ENCODE measurements at regions of chr3 and their contacts with region 1.

Region 1: GRCh38 chr3:44913868-44914468 is 39.6 kb downstream of the TGM4 start:
- DNase-seq: peak; percentile 54 to 62 (median 59)
- H3K4me3 ChIP-seq: no peak overlapping the region
- H3K4me3 Mint-ChIP-seq: no peak overlapping the region
- H3K27ac ChIP-seq: no peak overlapping the region
- H3K27ac Mint-ChIP-seq: peak overlapping the region in 1 of 7 donors; percentile 31
- H3K4me1 ChIP-seq: no peaks in the 10 kb centered on the region
- H3K4me1 Mint-ChIP-seq: peaks cover 0 to 2% (median under 1%) of the 10 kb centered on the region in 4 donors
- H3K27me3 ChIP-seq: no peaks in the 10 kb centered on the region
- H3K27me3 Mint-ChIP-seq: peaks cover 5 to 13% of the 10 kb centered on the region in 2 donors

Region 2: DNA sequence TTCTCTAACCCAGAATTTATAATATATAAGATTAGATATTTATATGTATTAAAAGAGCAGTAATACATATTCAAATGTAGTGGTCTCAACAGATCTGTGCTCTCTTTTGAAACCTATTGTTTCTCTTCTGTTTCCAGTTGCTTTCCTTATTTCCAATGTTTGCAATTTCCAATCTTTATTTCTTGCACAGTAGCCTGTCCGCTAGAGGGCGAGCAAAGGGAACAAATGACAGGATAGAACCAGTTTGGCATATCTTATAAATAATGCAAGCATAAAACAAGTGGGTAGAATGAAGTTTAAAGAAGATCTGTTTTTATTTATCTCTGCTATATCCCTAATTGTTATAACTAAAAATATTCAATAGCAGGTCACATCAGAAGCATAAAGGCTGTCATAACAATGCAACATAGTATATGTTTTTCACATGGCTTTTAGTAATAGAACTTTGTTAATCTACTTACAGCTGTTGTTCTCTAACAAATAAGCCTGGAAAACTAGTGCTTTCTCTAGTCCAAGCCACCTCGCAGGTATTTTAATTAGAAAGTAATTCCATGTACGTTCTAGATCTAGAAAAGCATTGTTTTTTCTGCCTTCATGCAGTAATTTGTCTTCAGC is 590.5 kb before region 1 on chr3:
- CTCF ChIA-PET with region 1: interaction called, 7 read pairs
- POLR2A ChIA-PET with region 1: no interaction called
- intact Hi-C with region 1: loop called (anchors 1 kb)
- DNase-seq: peak in 4 of 5 donors; percentile 39 to 49 (median 46)
- H3K4me3 ChIP-seq: no peak overlapping the region
- H3K4me3 Mint-ChIP-seq: no peak overlapping the region
- H3K27ac ChIP-seq: no peak overlapping the region
- H3K27ac Mint-ChIP-seq: no peak overlapping the region
- H3K4me1 ChIP-seq: no peaks in the 10 kb centered on the region
- H3K4me1 Mint-ChIP-seq: peaks cover 0 to 4% (median 0%) of the 10 kb centered on the region in 4 donors
- H3K27me3 ChIP-seq: no peaks in the 10 kb centered on the region
- H3K27me3 Mint-ChIP-seq: peaks cover 6 to 7% of the 10 kb centered on the region in 2 donors

Region 3: GRCh38 chr3:44529927-44530326 is 384.0 kb before region 1 on chr3:
- CTCF ChIA-PET with region 1: interaction called, 92 read pairs
- POLR2A ChIA-PET with region 1: interaction called, 3 read pairs
- intact Hi-C with region 1: no loop called
- DNase-seq: peak in 1 of 5 donors; percentile 22
- H3K4me3 ChIP-seq: no peak overlapping the region
- H3K4me3 Mint-ChIP-seq: no peak overlapping the region
- H3K27ac ChIP-seq: no peak overlapping the region
- H3K27ac Mint-ChIP-seq: peak overlapping the region in 1 of 7 donors; percentile 48
- H3K4me1 ChIP-seq: no peaks in the 10 kb centered on the region
- H3K4me1 Mint-ChIP-seq: peaks cover 0 to 2% (median under 1%) of the 10 kb centered on the region in 4 donors
- H3K27me3 ChIP-seq: no peaks in the 10 kb centered on the region
- H3K27me3 Mint-ChIP-seq: peaks cover 20 to 21% of the 10 kb centered on the region in 2 donors

Region 4: GRCh38 chr3:44535364-44535763 is 378.6 kb before region 1 on chr3:
- CTCF ChIA-PET with region 1: interaction called, 92 read pairs
- POLR2A ChIA-PET with region 1: interaction called, 3 read pairs
- intact Hi-C with region 1: no loop called
- DNase-seq: no peak
- H3K4me3 ChIP-seq: no peak overlapping the region
- H3K4me3 Mint-ChIP-seq: no peak overlapping the region
- H3K27ac ChIP-seq: no peak overlapping the region
- H3K27ac Mint-ChIP-seq: no peak overlapping the region
- H3K4me1 ChIP-seq: no peaks in the 10 kb centered on the region
- H3K4me1 Mint-ChIP-seq: peaks cover 0 to 2% (median under 1%) of the 10 kb centered on the region in 4 donors
- H3K27me3 ChIP-seq: no peaks in the 10 kb centered on the region
- H3K27me3 Mint-ChIP-seq: peaks cover 29 to 40% of the 10 kb centered on the region in 2 donors

Region 5: GRCh38 chr3:44612678-44613077 is 301.3 kb before region 1 on chr3:
- CTCF ChIA-PET with region 1: no interaction called
- POLR2A ChIA-PET with region 1: no interaction called
- intact Hi-C with region 1: no loop called
- DNase-seq: no peak
- H3K4me3 ChIP-seq: no peak overlapping the region
- H3K4me3 Mint-ChIP-seq: no peak overlapping the region
- H3K27ac ChIP-seq: no peak overlapping the region
- H3K27ac Mint-ChIP-seq: no peak overlapping the region
- H3K4me1 ChIP-seq: no peaks in the 10 kb centered on the region
- H3K4me1 Mint-ChIP-seq: no peaks in the 10 kb centered on the region
- H3K27me3 ChIP-seq: no peaks in the 10 kb centered on the region
- H3K27me3 Mint-ChIP-seq: peaks cover 2 to 5% of the 10 kb centered on the region in 2 donors

Region 6: DNA sequence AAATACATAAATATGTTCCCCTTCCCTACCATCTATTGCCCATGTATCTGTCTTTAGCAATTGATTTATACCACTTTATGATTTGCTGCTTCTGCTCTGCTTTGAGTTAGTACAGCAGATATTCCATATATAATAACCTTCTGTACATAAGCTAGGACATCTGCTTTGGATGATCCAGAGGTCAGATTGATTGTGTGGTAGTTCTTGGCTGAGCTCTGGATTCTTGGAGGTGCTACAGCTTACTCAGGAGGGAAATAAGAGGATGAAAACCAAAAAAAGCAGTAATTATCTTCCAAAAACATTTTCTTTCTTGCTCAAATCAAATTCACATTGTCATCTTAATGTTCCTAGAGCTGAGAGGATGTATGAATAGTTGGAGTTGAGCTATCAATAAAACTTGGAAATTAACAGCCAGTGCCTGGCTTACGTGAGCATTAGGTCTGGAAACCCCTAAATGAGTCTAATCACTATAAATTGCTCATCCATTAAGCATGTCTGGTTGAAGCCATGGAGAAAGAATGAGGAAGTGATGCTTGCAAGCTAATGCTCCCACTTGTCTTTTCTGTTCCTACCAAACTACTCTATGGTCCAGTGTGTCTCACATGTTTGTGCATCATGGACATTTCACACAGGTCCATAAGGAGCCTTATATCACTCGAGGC is 88.6 kb before region 1 on chr3:
- CTCF ChIA-PET with region 1: no interaction called
- POLR2A ChIA-PET with region 1: no interaction called
- intact Hi-C with region 1: no loop called
- DNase-seq: no peak
- H3K4me3 ChIP-seq: no peak overlapping the region
- H3K4me3 Mint-ChIP-seq: no peak overlapping the region
- H3K27ac ChIP-seq: no peak overlapping the region
- H3K27ac Mint-ChIP-seq: no peak overlapping the region
- H3K4me1 ChIP-seq: no peaks in the 10 kb centered on the region
- H3K4me1 Mint-ChIP-seq: no peaks in the 10 kb centered on the region
- H3K27me3 ChIP-seq: no peaks in the 10 kb centered on the region
- H3K27me3 Mint-ChIP-seq: no peaks in the 10 kb centered on the region

Region 7: DNA sequence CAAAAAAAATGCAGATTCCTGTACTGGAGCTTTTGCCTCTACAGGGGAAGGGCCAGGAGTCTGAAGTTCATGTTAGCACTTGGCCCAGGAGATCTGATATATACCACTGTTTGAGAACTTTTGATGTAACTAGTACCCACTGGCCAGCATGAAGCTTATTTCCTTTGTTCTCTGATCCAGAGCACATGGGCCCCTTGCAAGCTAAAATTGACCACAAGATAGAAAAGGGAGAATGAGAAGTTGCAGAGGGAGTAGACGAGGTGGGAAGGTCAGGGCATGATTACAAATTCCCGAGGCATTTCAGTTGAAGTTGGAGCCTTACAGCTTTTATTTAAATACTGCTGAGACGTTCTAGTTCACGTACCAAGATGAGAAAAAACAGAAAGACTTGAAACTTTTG is 11.3 kb before region 1 on chr3:
- CTCF ChIA-PET with region 1: interaction called, 12 read pairs
- POLR2A ChIA-PET with region 1: no interaction called
- intact Hi-C with region 1: no loop called
- DNase-seq: no peak
- H3K4me3 ChIP-seq: no peak overlapping the region
- H3K4me3 Mint-ChIP-seq: no peak overlapping the region
- H3K27ac ChIP-seq: no peak overlapping the region
- H3K27ac Mint-ChIP-seq: peak overlapping the region in 1 of 7 donors; percentile 57
- H3K4me1 ChIP-seq: no peaks in the 10 kb centered on the region
- H3K4me1 Mint-ChIP-seq: no peaks in the 10 kb centered on the region
- H3K27me3 ChIP-seq: no peaks in the 10 kb centered on the region
- H3K27me3 Mint-ChIP-seq: peaks cover 14 to 20% of the 10 kb centered on the region in 2 donors

Measured in CD4-positive, alpha-beta memory T cell (primary cell).